H1 (cell line): ENCODE measurements at regions of chr16 and their contacts with region 1.

Region 1: DNA sequence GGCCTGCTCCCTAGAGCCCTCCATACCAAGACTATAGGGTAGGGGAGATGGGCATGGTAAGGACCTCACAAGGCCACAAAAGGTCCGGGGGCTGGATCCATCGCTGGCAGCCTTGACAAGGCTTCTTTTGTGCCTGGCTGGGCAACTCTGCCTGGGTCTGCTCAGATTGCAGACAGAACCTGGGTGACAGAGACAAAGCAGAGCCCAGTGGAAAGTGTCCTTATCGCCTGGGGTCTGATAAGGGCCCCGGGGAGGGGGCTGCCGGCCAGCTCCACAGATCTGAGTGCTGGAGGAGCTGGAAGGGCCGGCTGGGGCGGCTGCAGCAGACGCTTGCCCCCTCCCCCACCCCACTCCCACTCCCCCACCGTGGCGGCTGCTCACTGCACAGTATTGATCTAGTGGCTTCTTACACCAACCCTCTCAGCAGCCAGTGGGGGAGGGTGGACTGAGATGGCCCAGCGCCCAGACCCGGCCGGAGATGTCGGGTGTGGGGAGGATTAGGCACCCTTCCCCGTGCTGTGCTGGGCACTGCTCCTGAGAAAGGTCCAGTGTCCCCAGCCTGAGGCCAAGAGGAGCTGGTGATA is 7.2 kb downstream of the MMP15 start:
- DNase-seq: no peak
- H3K4me3 ChIP-seq: no peak overlapping the region
- H3K27ac ChIP-seq: no peak overlapping the region
- H3K4me1 ChIP-seq: peaks cover 0 to 23% (median 15%) of the 10 kb centered on the region in 4 experiments; a peak in 6 of 7 replicates
- H3K27me3 ChIP-seq: no peaks in the 10 kb centered on the region
- CTCF ChIP-seq: no peak
- EP300 ChIP-seq: no peak
- POLR2A ChIP-seq: no peak
- RAD21 ChIP-seq: no peak

Region 2: DNA sequence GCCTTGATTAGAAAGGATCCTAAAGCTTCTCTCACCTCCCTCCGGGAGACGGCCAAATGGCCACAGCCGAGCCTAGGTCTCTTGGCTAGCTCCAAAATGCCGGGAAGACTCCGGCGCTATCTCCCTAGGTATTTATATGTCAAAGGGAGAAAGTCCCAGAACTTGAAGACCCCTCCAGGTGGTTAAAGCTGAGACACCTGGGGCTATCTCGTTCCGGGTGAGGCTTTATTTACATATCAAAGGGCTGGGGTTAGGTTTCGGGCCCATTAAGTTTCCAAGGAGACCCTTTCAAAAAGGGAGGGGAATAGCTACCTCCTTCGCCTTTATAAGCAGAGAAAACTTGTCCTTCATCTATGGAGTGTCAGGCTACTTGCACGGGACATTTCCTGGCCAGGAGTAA is 159.6 kb before region 1 on chr16:
- CTCF ChIA-PET with region 1: no interaction called
- POLR2A ChIA-PET with region 1: no interaction called
- DNase-seq: peak; percentile 50 to 64
- H3K4me3 ChIP-seq: peak overlapping the region in 3 of 4 experiments; percentile 18 to 39 (median 27); a peak in 4 of 8 replicates
- H3K27ac ChIP-seq: no peak overlapping the region
- H3K4me1 ChIP-seq: peaks cover 0 to 6% (median 3%) of the 10 kb centered on the region in 4 experiments; a peak in 3 of 7 replicates
- H3K27me3 ChIP-seq: no peaks in the 10 kb centered on the region
- CTCF ChIP-seq: no peak
- EP300 ChIP-seq: 0 out of 3 replicates have a peak, but pooled peaks of 1 of the 2 experiments have one; percentile 65
- POLR2A ChIP-seq: no peak
- RAD21 ChIP-seq: no peak

Region 3: DNA sequence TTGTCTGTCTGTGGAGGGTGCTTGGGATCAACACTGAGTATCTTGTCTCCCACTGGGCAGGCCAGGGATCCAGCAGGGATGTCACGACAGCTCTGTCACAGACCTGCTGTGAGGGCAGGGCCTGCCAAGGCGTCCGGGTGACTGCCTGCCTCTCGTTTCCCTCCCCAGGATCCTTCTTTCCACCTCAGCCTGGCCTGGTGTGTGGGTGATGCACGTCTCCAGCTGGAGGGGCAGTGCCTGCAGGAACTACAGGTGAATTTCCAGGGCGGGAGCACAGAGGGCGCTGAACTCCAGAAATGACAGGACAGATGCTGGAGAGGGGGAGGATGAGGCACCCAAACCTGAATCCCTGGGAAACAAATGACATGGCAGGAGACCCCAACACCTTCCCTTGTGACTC is 14.0 kb before region 1 on chr16:
- CTCF ChIA-PET with region 1: interaction called, 47 read pairs
- POLR2A ChIA-PET with region 1: interaction called, 3 read pairs
- DNase-seq: peak in 1 of 2 experiments; percentile 69
- H3K4me3 ChIP-seq: no peak overlapping the region
- H3K27ac ChIP-seq: no peak overlapping the region
- H3K4me1 ChIP-seq: peaks cover 0 to 12% (median 7%) of the 10 kb centered on the region in 4 experiments; a peak in 5 of 7 replicates
- H3K27me3 ChIP-seq: no peaks in the 10 kb centered on the region; a peak in 2 of 7 replicates
- CTCF ChIP-seq: peak; percentile 54 to 76 (median 74)
- EP300 ChIP-seq: no peak
- POLR2A ChIP-seq: no peak
- RAD21 ChIP-seq: peak; percentile 52 to 64; a peak in 3 of 4 replicates

Region 4: GRCh38 chr16:58047557-58048348 is 15.0 kb after region 1 on chr16:
- CTCF ChIA-PET with region 1: interaction called, 57 read pairs
- POLR2A ChIA-PET with region 1: interaction called, 4 read pairs
- DNase-seq: no peak
- H3K4me3 ChIP-seq: no peak overlapping the region
- H3K27ac ChIP-seq: no peak overlapping the region
- H3K4me1 ChIP-seq: peaks cover 0 to 15% (median 8%) of the 10 kb centered on the region in 4 experiments; a peak in 4 of 7 replicates
- H3K27me3 ChIP-seq: no peaks in the 10 kb centered on the region
- CTCF ChIP-seq: peak in 2 of 3 experiments; percentile 10 to 15; a peak in 1 of 4 replicates
- EP300 ChIP-seq: no peak
- POLR2A ChIP-seq: no peak
- RAD21 ChIP-seq: peak; percentile 50 to 51

Region 5: DNA sequence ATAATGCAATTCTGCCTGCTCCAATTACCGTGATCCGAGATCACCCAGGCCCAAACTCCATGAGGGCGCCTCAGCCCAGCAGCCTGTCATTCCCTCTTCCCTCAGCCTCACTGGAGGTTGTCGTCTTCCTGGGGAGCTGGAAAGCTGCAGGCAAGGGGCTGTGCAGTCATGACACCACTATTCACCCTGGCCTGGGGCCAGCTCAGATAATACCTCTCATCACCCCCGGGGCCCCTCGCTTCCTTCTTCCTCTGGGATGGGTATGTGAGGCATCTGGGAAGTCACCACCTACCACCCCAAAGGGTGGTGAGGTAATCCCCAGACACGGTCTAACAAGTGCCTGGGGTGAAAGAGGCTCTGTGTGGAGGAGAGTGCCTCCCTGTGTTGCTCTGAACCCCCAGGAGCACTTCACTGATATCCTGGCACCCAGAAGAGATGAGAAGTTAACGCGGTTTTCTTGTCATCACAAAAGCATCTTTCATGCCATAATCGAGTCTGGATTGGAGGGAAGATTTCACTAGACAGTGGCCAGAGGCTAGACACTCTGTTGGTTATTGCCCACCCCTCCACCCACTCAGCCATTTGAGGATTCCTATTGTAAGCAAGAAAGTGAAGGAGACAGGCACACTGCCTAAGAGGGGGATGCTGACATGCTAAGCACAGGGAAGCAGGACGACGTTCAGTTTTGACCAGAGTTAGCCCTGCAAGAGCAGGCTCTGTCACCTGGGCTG is 77.9 kb after region 1 on chr16:
- CTCF ChIA-PET with region 1: interaction called, 362 read pairs
- POLR2A ChIA-PET with region 1: interaction called, 3 read pairs
- DNase-seq: no peak
- H3K4me3 ChIP-seq: no peak overlapping the region
- H3K27ac ChIP-seq: no peak overlapping the region
- H3K4me1 ChIP-seq: peaks cover 9 to 24% (median 21%) of the 10 kb centered on the region in 4 experiments
- H3K27me3 ChIP-seq: no peaks in the 10 kb centered on the region
- CTCF ChIP-seq: no peak
- EP300 ChIP-seq: no peak
- POLR2A ChIP-seq: no peak
- RAD21 ChIP-seq: peak in 1 of 2 experiments; percentile 27; a peak in 1 of 4 replicates

Region 6: DNA sequence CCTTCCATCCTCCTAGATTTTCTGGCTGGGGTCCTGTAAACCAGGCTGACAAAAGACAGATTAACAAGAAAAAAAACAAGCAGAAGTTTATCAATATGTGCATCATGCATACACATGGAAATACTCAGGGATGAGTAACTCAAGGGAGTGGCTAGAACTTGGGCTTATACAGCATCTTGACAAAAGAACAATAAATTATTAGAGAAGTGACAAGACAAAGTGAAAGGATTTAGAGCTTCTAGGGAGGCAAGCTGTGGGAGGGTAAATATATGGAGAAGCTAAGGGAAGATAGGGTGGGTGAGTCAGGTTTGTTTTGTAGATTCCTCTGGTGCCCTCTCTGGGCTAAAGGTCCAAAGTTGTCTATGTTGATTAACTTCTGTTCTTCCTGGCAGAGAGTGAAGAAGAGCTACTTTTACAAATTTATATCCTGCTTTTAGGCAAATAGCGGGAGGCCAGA is 419.2 kb after region 1 on chr16:
- CTCF ChIA-PET with region 1: no interaction called
- POLR2A ChIA-PET with region 1: no interaction called
- DNase-seq: no peak
- H3K4me3 ChIP-seq: no peak overlapping the region
- H3K27ac ChIP-seq: no peak overlapping the region
- H3K4me1 ChIP-seq: no peaks in the 10 kb centered on the region
- H3K27me3 ChIP-seq: no peaks in the 10 kb centered on the region; a peak in 1 of 7 replicates
- CTCF ChIP-seq: no peak
- EP300 ChIP-seq: no peak
- POLR2A ChIP-seq: no peak
- RAD21 ChIP-seq: no peak